ENCODE measurements at regions of chr5 and their contacts with region 1.

Region 1: GRCh38 chr5:59380350-59380951 is 513.1 kb downstream of the PDE4D start:
- DNase-seq: peak; percentile 65
- H3K4me3 Mint-ChIP-seq: no peak overlapping the region
- H3K27ac Mint-ChIP-seq: no peak overlapping the region
- H3K4me1 Mint-ChIP-seq: peaks cover 6% of the 10 kb centered on the region
- H3K27me3 Mint-ChIP-seq: no peaks in the 10 kb centered on the region
- CTCF ChIP-seq: peak; percentile 38

Region 2: DNA sequence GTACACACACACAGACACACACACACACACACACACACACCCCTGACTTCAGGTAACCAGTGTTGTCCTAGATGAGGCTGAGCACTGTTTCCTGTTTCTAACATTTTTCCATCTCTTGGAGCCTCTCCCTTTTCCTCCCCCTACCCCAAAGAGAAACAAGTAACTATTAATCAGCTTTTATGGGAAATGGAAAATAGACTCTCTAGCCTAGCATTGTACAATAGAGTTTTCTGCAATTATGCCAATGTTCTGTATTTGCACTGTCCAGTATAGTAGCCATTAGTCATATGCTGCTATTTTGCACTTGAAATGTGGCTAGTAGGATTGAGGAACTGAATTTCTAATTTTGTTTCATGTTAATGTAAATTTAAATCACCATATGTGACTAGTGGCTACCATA is 764.5 kb before region 1 on chr5:
- CTCF ChIA-PET with region 1: no interaction called
- POLR2A ChIA-PET with region 1: no interaction called
- intact Hi-C with region 1: no loop called
- DNase-seq: no peak
- H3K4me3 Mint-ChIP-seq: no peak overlapping the region
- H3K27ac Mint-ChIP-seq: no peak overlapping the region
- H3K4me1 Mint-ChIP-seq: no peaks in the 10 kb centered on the region
- H3K27me3 Mint-ChIP-seq: peaks cover 89% of the 10 kb centered on the region
- CTCF ChIP-seq: no peak

Region 3: DNA sequence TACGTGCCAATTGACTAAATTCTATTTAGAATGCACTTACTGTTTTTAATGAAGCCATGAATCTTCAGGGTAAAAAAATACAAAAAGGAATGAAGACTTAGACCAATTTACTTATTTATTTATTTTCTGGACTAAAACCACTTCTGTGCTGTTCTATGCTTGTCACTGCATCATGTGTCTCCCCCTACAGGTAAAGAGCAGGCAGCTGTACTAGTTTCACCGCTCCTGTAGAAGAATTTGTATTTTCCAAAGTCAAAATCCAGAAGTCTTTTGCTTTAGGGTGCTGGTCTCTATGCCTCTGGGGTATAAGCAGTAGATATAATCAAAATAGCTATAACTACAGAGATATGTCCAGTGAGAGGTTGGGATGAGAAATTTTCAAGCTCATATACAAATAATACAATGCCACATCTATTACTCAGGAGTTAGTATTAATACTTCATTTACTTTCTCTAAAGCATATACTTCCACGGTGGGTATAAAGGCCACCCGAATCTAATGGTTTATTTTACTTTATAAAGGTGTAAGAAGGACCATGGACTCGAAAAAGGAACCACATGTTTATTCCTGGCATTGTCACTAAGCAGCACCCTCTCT is 206.1 kb before region 1 on chr5:
- CTCF ChIA-PET with region 1: interaction called, 14 read pairs
- POLR2A ChIA-PET with region 1: no interaction called
- intact Hi-C with region 1: no loop called
- DNase-seq: peak; percentile 73
- H3K4me3 Mint-ChIP-seq: no peak overlapping the region
- H3K27ac Mint-ChIP-seq: no peak overlapping the region
- H3K4me1 Mint-ChIP-seq: peaks cover 7% of the 10 kb centered on the region
- H3K27me3 Mint-ChIP-seq: no peaks in the 10 kb centered on the region
- CTCF ChIP-seq: peak; percentile 89

Region 4: DNA sequence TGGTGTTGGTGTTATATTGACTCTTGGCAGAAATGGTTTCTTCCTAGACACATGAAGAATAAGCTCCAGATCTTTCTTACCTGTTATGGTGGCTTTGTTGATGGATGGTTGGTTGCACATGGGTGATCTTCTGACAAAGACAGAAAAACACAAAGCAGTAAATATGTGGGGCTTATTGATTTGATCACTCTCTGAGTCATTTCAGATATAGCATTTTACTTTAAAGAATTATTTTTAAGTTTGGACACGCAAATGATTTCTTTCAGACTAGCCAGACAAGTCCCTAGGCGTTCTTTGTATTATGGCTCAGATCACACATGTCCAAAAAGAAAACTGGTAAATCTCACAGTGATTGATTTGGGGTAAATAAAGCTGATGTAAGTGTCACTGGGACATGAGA is 199.9 kb before region 1 on chr5:
- CTCF ChIA-PET with region 1: interaction called, 359 read pairs
- POLR2A ChIA-PET with region 1: no interaction called
- intact Hi-C with region 1: no loop called
- DNase-seq: no peak
- H3K4me3 Mint-ChIP-seq: no peak overlapping the region
- H3K27ac Mint-ChIP-seq: no peak overlapping the region
- H3K4me1 Mint-ChIP-seq: peaks cover 5% of the 10 kb centered on the region
- H3K27me3 Mint-ChIP-seq: no peaks in the 10 kb centered on the region
- CTCF ChIP-seq: no peak

Region 5: GRCh38 chr5:59193616-59194319 is 186.7 kb before region 1 on chr5:
- CTCF ChIA-PET with region 1: interaction called, 359 read pairs
- POLR2A ChIA-PET with region 1: interaction called, 7 read pairs
- intact Hi-C with region 1: loop called (anchors 1 kb)
- DNase-seq: peak; percentile 98
- H3K4me3 Mint-ChIP-seq: peak overlapping the region; percentile 55
- H3K27ac Mint-ChIP-seq: peak overlapping the region; percentile 100
- H3K4me1 Mint-ChIP-seq: peaks cover 31% of the 10 kb centered on the region
- H3K27me3 Mint-ChIP-seq: no peaks in the 10 kb centered on the region
- CTCF ChIP-seq: no peak

Region 6: GRCh38 chr5:59218424-59219045 is 161.9 kb before region 1 on chr5:
- CTCF ChIA-PET with region 1: interaction called, 13 read pairs
- POLR2A ChIA-PET with region 1: no interaction called
- intact Hi-C with region 1: no loop called
- DNase-seq: peak; percentile 11
- H3K4me3 Mint-ChIP-seq: no peak overlapping the region
- H3K27ac Mint-ChIP-seq: no peak overlapping the region
- H3K4me1 Mint-ChIP-seq: peaks cover 22% of the 10 kb centered on the region
- H3K27me3 Mint-ChIP-seq: no peaks in the 10 kb centered on the region
- CTCF ChIP-seq: peak; percentile 39

Region 7: GRCh38 chr5:59275510-59276324 is 104.7 kb before region 1 on chr5:
- CTCF ChIA-PET with region 1: no interaction called
- POLR2A ChIA-PET with region 1: no interaction called
- intact Hi-C with region 1: no loop called
- DNase-seq: peak; percentile 61
- H3K4me3 Mint-ChIP-seq: peak overlapping the region; percentile 89
- H3K27ac Mint-ChIP-seq: peak overlapping the region; percentile 97
- H3K4me1 Mint-ChIP-seq: peaks cover 18% of the 10 kb centered on the region
- H3K27me3 Mint-ChIP-seq: no peaks in the 10 kb centered on the region
- CTCF ChIP-seq: no peak

Region 8: DNA sequence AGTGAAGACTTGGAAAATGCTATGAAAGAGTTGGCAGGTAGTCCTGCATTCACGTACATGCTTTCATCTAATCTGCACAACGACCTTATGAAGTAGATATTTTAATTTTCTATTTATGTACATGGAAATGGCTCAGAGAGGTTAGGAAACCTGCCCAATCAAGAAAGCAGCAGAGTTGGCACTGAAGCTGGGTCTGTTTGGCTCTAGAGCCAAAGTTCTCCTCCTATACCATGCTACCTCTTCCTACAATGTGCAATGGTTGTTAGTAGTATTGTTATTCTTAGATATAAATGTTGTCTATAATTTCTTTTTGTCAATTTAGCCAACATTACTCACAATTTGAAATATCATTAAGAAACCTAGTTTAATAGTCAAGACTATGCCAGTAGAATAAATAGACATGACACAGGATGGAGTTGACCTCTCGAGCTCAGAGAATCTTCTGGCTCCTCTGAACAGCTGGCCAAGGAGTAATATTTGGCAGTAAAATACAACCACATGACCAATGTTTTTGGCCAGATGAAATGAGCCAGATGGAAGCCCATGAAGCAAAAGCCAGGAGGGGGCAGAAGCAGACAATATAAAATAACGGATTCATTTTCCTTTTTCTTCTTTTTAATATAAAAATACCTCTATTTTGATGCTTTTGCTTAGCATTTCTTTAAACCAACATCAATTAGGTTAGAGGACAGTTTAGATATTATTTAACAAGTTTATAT is 29.2 kb before region 1 on chr5:
- CTCF ChIA-PET with region 1: interaction called, 22 read pairs
- POLR2A ChIA-PET with region 1: no interaction called
- intact Hi-C with region 1: no loop called
- DNase-seq: peak; percentile 4
- H3K4me3 Mint-ChIP-seq: no peak overlapping the region
- H3K27ac Mint-ChIP-seq: no peak overlapping the region
- H3K4me1 Mint-ChIP-seq: no peaks in the 10 kb centered on the region
- H3K27me3 Mint-ChIP-seq: no peaks in the 10 kb centered on the region
- CTCF ChIP-seq: no peak

Region 9: DNA sequence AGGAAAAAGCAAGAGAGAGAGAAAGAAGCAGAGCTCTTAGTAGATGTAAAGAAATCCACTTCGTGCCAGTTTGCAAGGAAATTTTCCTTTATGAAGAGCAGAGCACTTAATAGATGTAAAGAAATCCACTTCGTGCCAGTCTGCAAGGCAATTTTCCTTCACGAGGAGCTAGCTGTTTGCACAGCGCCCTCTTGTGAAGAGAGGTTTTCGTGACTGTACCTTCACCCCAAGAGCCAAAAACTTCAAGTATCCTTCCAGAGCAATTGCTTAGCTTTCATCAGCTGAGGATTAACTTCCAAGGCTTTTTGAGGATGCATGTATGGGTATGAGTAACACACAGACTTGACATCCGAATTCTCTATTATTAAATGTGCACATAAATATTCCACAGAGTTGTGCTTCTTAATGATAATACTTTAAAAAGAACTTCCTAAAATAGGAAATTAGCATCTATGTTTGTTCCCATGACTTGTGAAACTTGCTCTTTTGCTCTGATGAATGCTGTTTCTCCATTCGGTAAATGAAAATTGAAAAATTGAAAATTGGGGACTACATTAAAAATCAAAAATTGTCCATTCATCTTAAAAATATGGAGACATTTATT is 12.6 kb before region 1 on chr5:
- CTCF ChIA-PET with region 1: interaction called, 54 read pairs
- POLR2A ChIA-PET with region 1: interaction called, 7 read pairs
- intact Hi-C with region 1: no loop called
- DNase-seq: peak; percentile 77
- H3K4me3 Mint-ChIP-seq: no peak overlapping the region
- H3K27ac Mint-ChIP-seq: no peak overlapping the region
- H3K4me1 Mint-ChIP-seq: no peaks in the 10 kb centered on the region
- H3K27me3 Mint-ChIP-seq: no peaks in the 10 kb centered on the region
- CTCF ChIP-seq: peak; percentile 87

Region 10: DNA sequence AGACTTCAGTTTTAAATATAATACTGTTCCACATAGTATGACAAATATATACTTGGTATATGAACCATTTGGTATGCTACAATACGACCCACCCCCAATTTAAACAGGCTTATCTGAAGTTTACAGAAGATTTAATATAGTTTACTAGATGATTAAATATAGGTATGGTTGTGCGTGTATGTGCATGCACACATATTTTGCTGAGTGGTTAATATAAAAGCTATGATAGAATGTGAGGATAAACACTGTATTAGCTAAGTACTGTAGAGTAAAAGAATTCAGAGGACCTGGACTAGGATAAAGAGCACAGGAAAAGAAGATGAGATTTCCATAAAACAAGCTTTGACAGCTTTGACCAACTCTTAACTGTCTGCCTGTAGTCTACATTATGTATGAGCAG is 156.4 kb after region 1 on chr5:
- CTCF ChIA-PET with region 1: no interaction called
- POLR2A ChIA-PET with region 1: no interaction called
- intact Hi-C with region 1: no loop called
- DNase-seq: no peak
- H3K4me3 Mint-ChIP-seq: no peak overlapping the region
- H3K27ac Mint-ChIP-seq: no peak overlapping the region
- H3K4me1 Mint-ChIP-seq: peaks cover 2% of the 10 kb centered on the region
- H3K27me3 Mint-ChIP-seq: no peaks in the 10 kb centered on the region
- CTCF ChIP-seq: no peak